ENCODE measurements at regions of chr6 and their contacts with region 1.

Region 1: DNA sequence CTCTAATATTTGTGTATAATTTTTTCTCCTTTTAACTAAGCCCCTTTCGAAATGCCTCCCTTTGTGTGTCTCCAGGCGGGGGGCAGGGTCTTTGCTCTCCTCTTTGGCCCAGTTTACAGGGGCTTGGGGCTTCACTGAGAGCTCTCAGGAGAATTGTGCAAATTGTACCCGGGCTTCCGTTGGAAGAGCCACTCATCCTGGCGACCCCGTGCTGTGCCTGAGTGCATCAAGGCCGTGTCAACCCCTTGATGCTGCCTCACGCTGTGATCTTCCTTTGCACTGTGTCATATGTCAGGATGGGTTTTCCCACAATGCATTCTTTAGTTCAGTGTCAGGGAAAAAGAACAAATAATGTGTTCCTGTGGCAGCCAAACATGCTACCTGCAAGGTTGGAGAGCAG is 118.0 kb upstream of the POU3F2 start:
- DNase-seq: no peak
- H3K4me3 ChIP-seq: no peak overlapping the region
- H3K27ac ChIP-seq: no peak overlapping the region
- H3K4me1 ChIP-seq: no peaks in the 10 kb centered on the region
- H3K27me3 ChIP-seq: no peaks in the 10 kb centered on the region
- CTCF ChIP-seq: no peak
- POLR2A ChIP-seq: no peak

Region 2: DNA sequence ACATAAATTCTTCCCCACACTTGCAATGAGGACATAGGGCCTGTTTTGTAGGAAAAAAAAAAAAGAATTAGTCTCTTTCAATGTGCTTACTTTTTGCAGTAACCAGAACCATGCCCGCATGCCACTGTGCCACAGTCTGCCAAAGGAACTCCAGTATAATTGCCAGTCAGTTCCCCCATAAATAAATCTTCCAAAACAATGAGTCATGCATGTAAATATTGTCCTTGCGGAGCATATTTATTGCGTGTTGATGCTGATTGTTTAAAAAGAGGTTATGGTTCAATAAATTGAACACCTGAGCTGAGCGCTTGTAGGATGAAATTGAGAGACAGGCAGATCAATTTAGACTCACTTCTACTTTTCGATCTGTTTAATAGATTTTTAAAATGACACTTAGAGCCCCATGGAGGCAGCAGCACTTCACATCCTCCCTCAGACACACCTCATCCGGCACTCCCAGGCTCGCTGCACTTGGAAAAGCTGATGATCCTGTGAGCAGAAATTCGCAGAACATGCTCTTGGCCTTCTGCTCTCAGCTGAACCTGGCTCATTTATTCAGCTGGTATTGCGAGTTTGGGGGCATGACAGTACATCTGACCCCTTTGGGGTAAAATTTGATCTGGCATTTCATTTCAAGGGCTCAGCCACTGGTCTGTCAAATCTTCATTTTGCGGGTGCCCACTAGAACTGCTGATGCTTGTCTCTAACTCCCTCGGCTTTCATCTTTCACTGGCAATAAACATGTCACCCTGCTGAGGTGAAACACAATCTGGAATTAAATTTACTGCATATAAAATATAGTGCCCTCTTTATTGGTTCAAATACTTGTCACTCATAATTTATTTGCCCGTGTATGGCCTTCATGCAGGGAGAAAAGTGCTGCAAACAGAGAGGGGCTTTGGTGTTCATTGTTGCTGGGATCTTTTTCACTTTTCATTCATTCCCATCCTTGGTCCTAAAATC is 253.0 kb before region 1 on chr6:
- intact Hi-C with region 1: no loop called
- DNase-seq: no peak
- H3K4me3 ChIP-seq: no peak overlapping the region
- H3K27ac ChIP-seq: no peak overlapping the region
- H3K4me1 ChIP-seq: no peaks in the 10 kb centered on the region
- H3K27me3 ChIP-seq: no peaks in the 10 kb centered on the region
- CTCF ChIP-seq: no peak
- POLR2A ChIP-seq: no peak

Region 3: GRCh38 chr6:98695091-98695801 is 21.1 kb before region 1 on chr6:
- intact Hi-C with region 1: loop called (anchors 2 kb)
- DNase-seq: no peak
- H3K4me3 ChIP-seq: no peak overlapping the region
- H3K27ac ChIP-seq: no peak overlapping the region
- H3K4me1 ChIP-seq: no peaks in the 10 kb centered on the region
- H3K27me3 ChIP-seq: no peaks in the 10 kb centered on the region
- CTCF ChIP-seq: no peak
- POLR2A ChIP-seq: no peak

Measured in vagina (tissue), 2 donors.